Caco-2 (cell line): ENCODE measurements at regions of chr22 and their contacts with region 1.

Region 1: DNA sequence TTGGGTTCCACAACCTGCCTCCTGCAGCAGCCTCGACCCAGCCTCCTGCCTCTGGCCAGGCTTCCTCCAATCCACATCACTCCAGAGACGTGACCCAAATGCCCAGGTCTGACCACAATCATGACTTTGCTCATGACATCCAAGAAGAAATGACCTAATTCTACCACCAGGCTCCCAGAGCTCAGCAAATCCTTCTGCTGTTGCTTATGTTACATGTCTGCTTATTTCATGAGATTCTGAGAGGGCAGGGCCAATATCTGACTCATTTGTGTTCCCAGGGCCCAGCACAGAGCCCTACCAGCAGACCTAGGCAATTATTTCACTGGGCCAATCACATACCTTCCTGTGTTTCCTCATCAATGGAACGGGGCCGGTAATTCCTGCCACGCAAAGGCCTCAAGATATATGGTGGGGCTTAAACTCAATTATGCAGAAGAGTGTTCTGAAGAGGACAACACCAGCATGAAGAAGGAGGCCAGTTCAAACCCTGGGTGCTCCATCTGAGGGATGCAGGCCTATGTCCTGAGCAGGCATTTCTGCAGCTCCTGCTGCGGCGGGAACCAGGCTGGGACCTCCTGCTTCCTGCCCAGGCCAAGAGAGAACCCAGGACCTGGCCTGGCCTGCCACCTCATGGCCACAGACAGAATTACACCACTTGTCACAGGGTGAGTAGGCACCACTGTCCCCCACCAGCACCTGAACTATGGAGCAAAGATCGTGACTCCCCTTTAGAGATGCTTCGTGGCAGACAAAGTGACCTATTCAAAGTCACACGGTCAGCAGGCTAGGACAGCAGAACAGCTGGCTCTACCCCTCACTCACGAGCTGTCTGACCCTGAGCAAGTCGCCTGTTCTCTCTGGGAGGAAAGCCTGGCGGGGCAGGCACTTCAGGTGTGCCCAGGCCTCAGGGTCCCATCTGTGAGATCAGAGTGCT is 5.9 kb downstream of the CENPM start:
- DNase-seq: peak; percentile 80 to 87
- H3K4me3 ChIP-seq: no peak overlapping the region
- H3K4me3 Mint-ChIP-seq: no peak overlapping the region
- H3K27ac Mint-ChIP-seq: no peak overlapping the region
- H3K4me1 ChIP-seq: no peaks in the 10 kb centered on the region
- H3K4me1 Mint-ChIP-seq: peaks cover 7% of the 10 kb centered on the region
- H3K27me3 ChIP-seq: no peaks in the 10 kb centered on the region
- H3K27me3 Mint-ChIP-seq: no peaks in the 10 kb centered on the region
- CTCF ChIP-seq: peak; percentile 82 to 85

Region 2: DNA sequence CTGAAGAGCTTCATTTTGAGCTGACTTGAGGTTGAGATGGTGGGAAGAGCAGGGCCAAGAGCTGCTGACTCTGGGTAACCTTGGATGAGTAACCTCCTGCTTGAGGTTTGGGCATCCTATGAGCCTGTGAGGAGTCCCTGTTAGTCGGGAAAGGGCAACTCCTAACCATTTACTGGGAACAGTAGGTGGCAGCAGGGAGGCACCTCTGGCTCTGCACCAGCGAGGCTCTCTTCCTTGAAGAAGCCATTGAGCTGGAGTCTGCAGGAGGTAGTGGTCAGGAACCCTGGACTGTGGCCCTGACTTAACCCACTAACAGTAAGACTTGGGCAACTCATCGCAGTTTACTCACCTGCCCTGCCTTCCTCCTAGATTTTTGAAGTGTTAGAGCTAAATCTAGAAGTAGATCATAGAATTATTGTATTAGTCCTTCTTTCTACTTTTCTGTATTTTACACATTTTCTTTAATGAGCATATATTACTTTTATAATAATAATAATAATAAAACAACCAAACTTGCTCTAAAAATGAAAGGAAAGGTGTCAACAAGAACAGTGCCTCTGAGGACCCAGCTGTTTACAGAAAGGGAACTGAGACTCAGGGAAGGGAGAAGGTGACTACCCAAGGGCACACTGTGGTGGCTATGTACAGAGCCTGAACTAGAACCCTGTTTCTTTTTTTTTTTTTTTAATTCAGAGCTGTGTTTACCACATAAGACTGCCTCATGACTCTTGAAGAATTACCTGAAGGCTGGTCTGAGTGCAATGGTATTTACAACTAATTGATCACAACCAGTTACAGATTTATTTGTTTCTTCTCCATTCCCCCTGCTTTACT is 194.3 kb before region 1 on chr22:
- CTCF ChIA-PET with region 1: interaction called, 14 read pairs
- POLR2A ChIA-PET with region 1: no interaction called
- intact Hi-C with region 1: loop called (anchors 1 kb)
- DNase-seq: peak; percentile 80 to 84
- H3K4me3 ChIP-seq: no peak overlapping the region
- H3K4me3 Mint-ChIP-seq: no peak overlapping the region
- H3K27ac Mint-ChIP-seq: no peak overlapping the region
- H3K4me1 ChIP-seq: no peaks in the 10 kb centered on the region
- H3K4me1 Mint-ChIP-seq: no peaks in the 10 kb centered on the region
- H3K27me3 ChIP-seq: no peaks in the 10 kb centered on the region
- H3K27me3 Mint-ChIP-seq: peaks cover 3% of the 10 kb centered on the region
- CTCF ChIP-seq: peak; percentile 62 to 91

Region 3: DNA sequence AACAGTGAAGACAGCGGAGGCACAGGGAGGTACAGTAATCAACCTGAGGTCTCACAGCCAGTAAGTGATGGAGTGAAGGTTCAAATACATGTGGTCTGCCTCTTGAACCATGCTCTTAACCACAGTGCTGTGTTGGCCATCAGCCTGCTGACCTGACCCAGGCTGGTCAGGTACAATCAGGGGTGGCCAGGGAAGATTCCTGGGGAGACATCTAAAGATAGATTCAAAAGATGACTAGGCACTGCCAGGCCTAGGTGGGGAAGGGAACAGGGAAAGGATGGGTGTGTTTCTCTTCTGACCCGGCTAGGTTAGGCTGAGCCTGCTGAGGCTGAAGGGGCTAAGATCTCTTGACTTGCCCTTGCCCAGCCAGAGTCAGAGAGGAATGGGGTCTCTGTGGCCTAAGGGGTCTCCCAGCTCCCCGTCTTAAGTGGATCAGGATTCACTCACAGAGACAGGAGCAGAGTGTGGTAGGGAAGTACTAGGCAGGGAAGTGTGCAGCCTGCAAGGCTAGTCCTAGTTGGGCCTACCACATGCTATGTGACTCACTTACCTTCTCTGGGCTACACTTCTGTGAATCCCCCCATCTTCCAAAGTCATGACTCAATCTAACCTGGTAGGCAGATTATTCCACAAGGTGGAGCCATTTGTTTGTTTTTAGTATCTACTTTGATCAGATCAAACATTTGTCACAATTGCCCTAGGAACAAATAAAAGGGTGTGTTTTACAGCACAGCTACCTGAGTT is 118.6 kb before region 1 on chr22:
- CTCF ChIA-PET with region 1: interaction called, 12 read pairs
- POLR2A ChIA-PET with region 1: no interaction called
- intact Hi-C with region 1: loop called (anchors 2 kb)
- DNase-seq: peak in 1 of 2 experiments; percentile 54
- H3K4me3 ChIP-seq: no peak overlapping the region
- H3K4me3 Mint-ChIP-seq: no peak overlapping the region
- H3K27ac Mint-ChIP-seq: peak overlapping the region; percentile 8
- H3K4me1 ChIP-seq: no peaks in the 10 kb centered on the region
- H3K4me1 Mint-ChIP-seq: peaks cover 15% of the 10 kb centered on the region
- H3K27me3 ChIP-seq: no peaks in the 10 kb centered on the region
- H3K27me3 Mint-ChIP-seq: no peaks in the 10 kb centered on the region
- CTCF ChIP-seq: peak; percentile 45 to 53

Region 4: DNA sequence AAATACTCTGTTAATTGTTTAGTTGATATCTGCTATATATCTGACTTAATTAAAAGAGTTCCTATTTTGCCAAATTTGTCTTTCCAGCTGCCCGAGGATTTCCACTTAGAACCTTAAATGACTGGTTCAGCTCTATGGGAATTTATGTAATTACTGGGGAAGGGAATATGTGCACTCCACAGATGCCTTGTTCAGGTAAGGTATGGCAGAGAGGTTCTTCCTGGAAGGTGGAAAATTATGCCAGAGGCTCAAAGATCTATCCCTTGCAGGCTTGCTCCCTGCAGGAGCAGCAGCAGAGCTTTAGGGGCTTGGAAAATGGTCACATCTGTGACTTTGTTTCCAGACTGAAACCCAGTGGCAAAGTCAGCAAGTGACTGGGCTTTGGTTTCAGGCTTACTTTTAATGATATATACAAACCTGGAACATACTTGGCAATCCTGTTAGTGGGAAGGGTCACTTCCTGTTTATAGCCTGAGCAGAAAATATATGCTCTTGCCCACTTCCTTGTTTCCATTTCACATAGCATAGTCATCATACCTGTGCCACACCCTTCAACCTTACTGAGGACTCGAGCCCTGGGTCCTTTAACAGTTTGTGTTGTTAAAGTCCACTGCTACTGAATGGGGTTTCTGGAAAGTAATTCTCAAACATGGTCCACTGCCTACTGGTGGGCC is 81.2 kb after region 1 on chr22:
- CTCF ChIA-PET with region 1: no interaction called
- POLR2A ChIA-PET with region 1: no interaction called
- intact Hi-C with region 1: no loop called
- DNase-seq: no peak
- H3K4me3 ChIP-seq: no peak overlapping the region
- H3K4me3 Mint-ChIP-seq: no peak overlapping the region
- H3K27ac Mint-ChIP-seq: no peak overlapping the region
- H3K4me1 ChIP-seq: peaks cover 6% of the 10 kb centered on the region
- H3K4me1 Mint-ChIP-seq: no peaks in the 10 kb centered on the region
- H3K27me3 ChIP-seq: no peaks in the 10 kb centered on the region
- H3K27me3 Mint-ChIP-seq: peaks cover 5% of the 10 kb centered on the region
- CTCF ChIP-seq: no peak